Posterior vena cava (tissue), 2 donors: ENCODE measurements at regions of chr1 and their contacts with region 1.

Region 1: DNA sequence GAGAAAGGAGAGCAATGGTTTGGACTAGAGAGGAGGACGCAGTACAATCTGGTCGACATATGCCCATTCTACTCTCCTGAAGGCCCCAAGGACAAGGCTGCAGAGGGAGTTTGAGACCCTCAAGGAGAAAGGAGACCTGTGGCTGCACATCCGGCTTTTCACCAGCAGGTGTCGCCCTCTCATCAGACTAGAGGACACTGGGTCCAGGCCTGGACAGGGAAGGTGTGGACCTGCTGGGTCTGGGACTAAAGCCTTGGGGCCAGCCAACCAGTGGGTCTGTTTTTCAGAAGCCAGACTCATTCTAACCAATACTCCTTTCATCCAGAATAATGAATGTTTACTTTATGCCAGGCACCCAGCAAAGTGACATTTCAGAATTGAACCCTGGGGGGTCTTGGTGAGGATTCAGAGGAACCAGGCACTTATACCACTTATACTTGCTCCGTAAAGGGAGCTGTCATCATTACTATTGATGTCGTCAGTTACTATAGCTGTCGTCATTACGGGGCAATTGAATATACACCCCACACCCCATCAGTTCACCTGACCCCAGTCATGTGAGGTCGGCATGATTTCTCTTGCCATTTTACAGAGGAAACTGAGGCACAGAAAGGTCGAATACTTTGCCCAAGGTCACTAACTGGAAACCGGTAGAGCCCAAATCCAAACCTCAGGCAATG is 5.1 kb downstream of the SRARP start:
- DNase-seq: peak; percentile 93

Region 2: GRCh38 chr1:16031551-16031950 is 22.4 kb after region 1 on chr1:
- intact Hi-C with region 1: loop called in 1 of 2 experiments (anchors 2 kb)
- DNase-seq: no peak

Region 3: DNA sequence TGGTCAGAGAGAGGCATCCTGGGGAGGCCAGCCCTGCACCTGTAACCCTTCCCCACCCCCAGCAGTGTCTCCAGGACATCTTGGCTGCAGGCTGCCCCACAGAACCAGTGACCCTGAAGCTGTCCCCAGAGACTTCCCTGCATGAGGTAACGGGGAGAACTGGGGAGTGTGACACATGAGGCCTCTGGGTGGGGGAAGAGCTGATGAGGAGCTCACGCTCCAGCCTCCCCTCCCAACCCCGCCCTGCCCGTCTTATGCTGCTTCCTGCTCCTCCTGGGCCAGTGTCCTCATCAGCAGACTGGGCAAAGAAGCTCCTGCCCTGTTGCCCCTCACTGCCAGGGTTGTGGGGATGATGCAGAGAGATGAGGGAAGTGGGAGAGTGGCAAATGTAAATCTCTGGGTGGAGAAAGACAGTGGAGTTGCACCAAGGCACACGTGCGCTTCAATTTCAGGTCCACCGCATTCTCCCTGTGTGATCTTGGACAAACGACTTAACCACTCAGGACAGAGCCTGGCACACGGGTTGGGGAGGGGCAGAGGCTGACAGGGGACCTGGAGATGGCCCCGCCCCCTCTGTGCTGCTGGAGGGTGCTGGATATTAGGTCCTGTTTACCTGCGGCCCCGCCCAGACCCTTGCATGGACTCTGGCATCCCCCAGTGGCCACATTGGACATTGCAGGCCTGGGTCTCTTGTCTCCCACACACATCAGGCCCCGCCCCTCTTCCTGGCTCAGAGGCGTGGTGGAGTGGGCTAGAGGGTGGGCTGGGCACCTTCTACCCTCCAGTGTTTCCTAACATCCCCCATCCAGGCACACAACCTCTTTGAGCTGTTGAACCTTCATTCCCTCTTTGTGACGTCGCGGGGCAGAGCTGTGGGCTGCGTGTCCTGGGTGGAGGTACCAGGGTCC is 46.7 kb after region 1 on chr1:
- intact Hi-C with region 1: loop called (anchors 2 to 5 kb)
- DNase-seq: peak; percentile 91